ENCODE measurements at regions of chr6 and their contacts with region 1.

Region 1: GRCh38 chr6:14638906-14639761 is 521.6 kb downstream of the CD83 start:
- DNase-seq: no peak
- ATAC-seq: peak; percentile 60
- H3K4me3 Mint-ChIP-seq: peak overlapping the region; percentile 86
- H3K27ac Mint-ChIP-seq: peak overlapping the region; percentile 96
- H3K4me1 Mint-ChIP-seq: peaks cover 82% of the 10 kb centered on the region
- H3K27me3 Mint-ChIP-seq: no peaks in the 10 kb centered on the region
- CTCF ChIP-seq: no peak

Region 2: GRCh38 chr6:14310960-14311359 is 328.2 kb before region 1 on chr6:
- CTCF ChIA-PET with region 1: no interaction called
- POLR2A ChIA-PET with region 1: no interaction called
- intact Hi-C with region 1: loop called (anchors 2 kb)
- DNase-seq: no peak
- ATAC-seq: no peak
- H3K4me3 Mint-ChIP-seq: no peak overlapping the region
- H3K27ac Mint-ChIP-seq: peak overlapping the region; percentile 87
- H3K4me1 Mint-ChIP-seq: peaks cover 84% of the 10 kb centered on the region
- H3K27me3 Mint-ChIP-seq: no peaks in the 10 kb centered on the region
- CTCF ChIP-seq: no peak

Region 3: DNA sequence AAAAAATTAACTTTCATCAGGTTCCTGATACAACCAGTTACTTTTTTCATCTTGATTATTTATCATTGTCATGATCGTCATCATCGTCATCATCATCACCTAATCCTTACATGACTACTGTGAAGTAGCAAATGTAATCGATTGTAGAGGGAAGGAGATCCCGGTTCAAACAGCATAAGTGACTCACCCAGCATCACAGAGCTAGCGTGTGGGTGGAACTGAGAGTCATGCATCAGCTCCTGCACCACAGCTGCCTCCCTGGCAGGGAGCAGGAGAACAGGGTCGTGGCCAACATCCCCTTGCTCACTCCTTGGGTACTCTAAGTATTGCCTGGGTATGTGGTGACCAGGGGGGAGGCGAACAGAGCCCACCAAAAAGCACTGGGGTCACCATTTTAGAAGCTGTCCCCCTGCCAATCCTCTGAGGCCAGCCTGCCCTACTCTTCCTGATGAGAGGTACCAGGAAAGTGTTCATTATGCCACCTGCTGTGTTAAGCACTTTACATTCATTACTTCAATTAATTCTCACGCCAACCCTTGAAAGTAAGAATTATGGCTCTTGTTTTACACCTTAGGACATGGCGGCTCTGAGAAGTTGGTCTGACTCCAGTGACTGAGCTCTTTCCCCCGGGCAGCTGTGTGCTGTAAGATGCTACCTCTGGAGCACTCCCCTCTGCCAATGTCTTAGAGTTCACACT is 96.3 kb before region 1 on chr6:
- CTCF ChIA-PET with region 1: no interaction called
- POLR2A ChIA-PET with region 1: no interaction called
- intact Hi-C with region 1: loop called (anchors 2 kb)
- DNase-seq: peak; percentile 23
- ATAC-seq: peak; percentile 98
- H3K4me3 Mint-ChIP-seq: peak overlapping the region; percentile 6
- H3K27ac Mint-ChIP-seq: peak overlapping the region; percentile 21
- H3K4me1 Mint-ChIP-seq: peaks cover 34% of the 10 kb centered on the region
- H3K27me3 Mint-ChIP-seq: no peaks in the 10 kb centered on the region
- CTCF ChIP-seq: no peak

Measured in activated B cell treated with CpG ODN at 0.5 μM for 24 hours (primary cell).